Left colon (tissue), 2 donors: ENCODE measurements at regions of chr15 and their contacts with region 1.

Region 1: GRCh38 chr15:74438721-74439316 is 5.1 kb upstream of the SEMA7A start:
- DNase-seq: peak; percentile 40 to 75
- ATAC-seq: peak; percentile 80

Region 2: DNA sequence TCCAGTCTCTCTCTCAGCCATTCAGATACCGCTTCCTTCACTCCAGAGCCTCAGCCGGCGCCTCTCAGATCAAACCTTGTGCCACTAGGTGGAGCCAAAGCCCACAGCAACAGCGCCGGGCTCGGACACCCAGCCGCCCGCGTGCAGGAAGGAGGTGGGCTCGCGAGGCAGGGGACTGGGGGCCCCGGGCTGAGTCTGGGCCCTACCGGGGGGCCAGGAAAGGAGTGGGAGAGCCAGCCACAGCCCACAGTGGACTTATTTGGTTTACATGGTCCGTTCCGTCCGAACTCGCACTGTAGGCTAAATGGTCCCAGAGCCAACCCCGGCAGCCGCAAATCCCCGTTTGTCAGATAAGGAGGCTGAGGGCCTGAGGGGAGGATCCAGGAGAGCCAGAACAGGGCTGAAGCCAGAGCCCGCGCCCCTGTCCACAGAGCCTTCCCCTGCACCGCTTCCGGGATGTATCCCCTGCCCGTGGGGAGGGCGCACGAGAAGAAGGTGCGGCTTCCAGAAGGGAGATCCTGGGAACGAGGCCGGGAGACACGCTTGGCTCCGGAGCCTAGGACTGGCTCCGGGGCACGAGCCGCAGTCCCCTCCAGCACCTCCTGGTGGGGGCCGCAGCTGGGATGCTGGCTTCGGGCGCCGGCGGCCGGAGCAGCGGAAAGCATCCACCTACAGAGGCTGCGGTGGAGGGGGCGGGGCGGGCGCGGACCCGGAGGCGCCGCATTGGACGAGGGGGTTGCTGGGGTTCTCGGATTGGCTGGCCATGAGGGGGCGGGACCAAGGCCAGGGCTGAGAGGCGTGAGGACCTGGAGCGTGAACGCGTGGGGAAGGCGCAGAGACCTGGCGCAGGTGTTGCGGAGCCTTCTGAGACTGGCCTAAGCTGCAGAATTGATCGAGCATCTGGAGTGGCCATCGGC is 64.8 kb before region 1 on chr15:
- intact Hi-C with region 1: loop called in 1 of 2 experiments (anchors 5 kb)
- DNase-seq: peak; percentile 92 to 97
- ATAC-seq: peak; percentile 99

Region 3: GRCh38 chr15:74382004-74382816 is 56.6 kb before region 1 on chr15:
- intact Hi-C with region 1: loop called (anchors 5 kb)
- DNase-seq: peak; percentile 67 to 89
- ATAC-seq: peak; percentile 95